Spleen (tissue), 13 donors: ENCODE measurements at regions of chr4 and their contacts with region 1.

Region 1: GRCh38 chr4:176383273-176384077 is 63.7 kb downstream of the SPCS3 start:
- DNase-seq: no peak
- H3K4me3 ChIP-seq: no peak overlapping the region
- H3K27ac ChIP-seq: no peak overlapping the region
- H3K4me1 ChIP-seq: no peaks in the 10 kb centered on the region
- H3K27me3 ChIP-seq: no peaks in the 10 kb centered on the region
- CTCF ChIP-seq: no peak
- POLR2A ChIP-seq: no peak

Region 2: GRCh38 chr4:176302283-176303275 is 80.9 kb before region 1 on chr4:
- intact Hi-C with region 1: no loop called
- DNase-seq: no peak
- H3K4me3 ChIP-seq: no peak overlapping the region
- H3K27ac ChIP-seq: no peak overlapping the region
- H3K4me1 ChIP-seq: no peaks in the 10 kb centered on the region
- H3K27me3 ChIP-seq: peaks cover 0 to 27% (median 0%) of the 10 kb centered on the region in 7 donors
- CTCF ChIP-seq: no peak
- POLR2A ChIP-seq: no peak

Region 3: DNA sequence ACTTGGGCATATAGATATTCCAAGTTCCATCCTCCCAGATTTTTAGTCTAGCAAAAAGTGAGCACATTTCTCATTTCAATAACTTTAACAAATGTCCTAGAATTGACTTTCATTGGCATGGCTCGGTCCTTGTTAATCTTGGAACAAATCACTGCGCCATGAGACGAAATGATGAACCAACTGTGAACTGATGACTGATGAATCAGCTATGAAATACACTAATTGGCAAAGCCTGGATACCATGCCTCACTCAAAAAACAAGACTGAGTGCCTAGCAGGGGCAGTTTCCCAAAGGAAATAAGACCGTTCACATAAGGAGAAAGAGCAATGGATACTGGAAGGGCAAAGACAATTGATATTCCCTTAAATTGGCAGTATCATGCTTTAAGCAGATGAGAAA is 657.9 kb after region 1 on chr4:
- intact Hi-C with region 1: loop called (anchors 5 kb)
- DNase-seq: no peak
- H3K4me3 ChIP-seq: no peak overlapping the region
- H3K27ac ChIP-seq: no peak overlapping the region
- H3K4me1 ChIP-seq: no peaks in the 10 kb centered on the region
- H3K27me3 ChIP-seq: no peaks in the 10 kb centered on the region
- CTCF ChIP-seq: no peak
- POLR2A ChIP-seq: no peak